GM13976 (cell line): ENCODE measurements at regions of chr5 and their contacts with region 1.

Region 1: DNA sequence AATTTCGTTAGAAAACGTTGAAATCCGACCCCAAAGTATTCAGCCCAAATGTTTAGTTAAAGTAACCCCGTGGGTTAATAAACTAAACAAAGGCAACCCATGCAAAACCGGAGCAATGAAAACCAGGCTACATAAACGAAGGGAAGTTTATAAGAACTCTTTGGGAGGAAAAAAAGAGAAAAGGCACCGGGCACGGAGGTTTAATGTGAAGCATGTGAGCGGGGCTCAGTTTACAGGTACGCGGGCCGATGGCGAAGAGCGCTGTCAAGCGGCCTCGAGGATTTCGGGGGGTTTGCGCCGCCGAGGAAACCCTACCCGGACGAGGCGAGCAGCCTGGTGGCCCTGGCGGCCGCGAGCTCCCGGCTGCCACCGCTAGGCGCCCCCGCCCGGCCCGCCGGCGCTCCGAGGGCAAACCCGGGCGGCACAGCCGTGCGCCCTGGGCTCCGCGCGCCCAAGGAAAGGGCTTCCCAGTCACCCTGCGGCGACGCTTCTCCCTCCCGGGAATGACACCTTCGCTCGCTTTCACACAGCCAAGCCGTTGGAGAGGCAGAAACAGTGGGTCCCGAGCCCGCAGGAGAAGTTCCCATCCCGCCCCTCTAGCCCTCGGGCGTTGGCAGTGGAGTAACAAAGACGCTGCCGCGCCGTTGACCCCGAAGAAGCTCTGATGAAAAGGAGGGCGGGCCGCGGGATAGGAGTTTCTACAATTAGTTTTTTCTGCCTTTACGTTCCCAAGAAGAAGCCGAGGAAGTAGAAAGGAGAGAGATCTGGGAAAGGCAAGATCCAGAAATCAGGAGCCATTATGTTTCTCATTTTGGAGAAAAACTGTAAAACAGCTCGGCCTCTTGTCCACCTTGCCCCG is 126.0 kb downstream of the TMEM174 start:
- DNase-seq: peak; percentile 30
- CTCF ChIP-seq: no peak

Region 2: DNA sequence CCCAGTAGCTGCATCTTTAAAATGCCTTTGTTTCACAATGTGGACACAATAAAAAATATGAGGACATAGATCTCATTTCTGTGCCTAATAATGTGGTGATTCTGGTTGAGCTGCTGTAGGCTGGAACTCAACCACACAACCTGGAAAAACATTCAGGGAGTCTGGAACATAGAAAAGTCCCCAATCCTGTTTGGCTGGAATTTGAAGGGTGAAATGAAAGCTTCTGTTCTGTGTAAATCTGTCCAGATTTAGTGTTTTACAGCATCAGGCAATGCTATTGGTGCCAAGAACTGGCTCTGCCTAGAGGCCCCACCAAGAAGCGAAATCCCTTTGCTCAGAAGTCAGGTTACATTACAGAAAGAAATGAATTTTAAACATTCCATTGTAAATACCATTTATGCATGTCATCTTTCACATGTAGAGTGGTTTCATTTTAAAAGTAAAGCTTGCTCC is 69.8 kb before region 1 on chr5:
- in situ Hi-C with region 1: loop called (anchors 10 kb)
- DNase-seq: no peak
- CTCF ChIP-seq: no peak

Region 3: DNA sequence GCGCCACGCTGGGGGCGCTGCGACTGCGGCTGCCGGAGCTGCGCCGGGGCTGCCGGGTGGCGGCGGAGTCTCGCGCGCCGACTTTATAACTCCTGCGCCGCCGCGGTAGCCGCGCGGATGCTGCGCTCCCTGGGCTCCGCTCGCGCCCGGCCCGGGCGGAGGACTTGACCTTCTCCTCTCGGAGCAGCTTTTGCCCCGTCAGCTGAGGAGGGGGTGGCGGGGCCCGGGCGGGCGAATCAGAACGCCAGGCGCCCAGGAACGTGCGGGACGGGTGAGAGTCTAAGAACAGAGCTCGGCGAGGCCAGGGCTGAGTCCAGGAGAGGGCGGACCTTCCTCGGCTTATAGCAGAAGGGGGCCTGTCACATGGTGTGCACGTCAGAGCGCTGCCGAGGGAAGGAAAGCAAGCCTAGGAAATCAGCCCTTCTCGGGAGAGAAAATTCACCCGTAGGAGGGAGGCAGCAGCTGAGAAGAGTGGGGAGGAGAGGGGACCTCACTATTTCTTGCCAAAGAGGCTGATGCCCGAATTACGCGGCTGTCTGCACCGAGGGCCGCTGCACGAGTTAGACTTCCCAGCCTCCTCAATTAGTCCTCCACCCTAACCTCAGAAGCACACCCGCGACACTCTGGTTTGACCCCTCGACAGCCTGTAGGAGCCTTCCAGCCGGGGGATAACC is 149.6 kb after region 1 on chr5 and contains the start of gene FOXD1:
- in situ Hi-C with region 1: loop called (anchors 10 kb)
- DNase-seq: peak; percentile 57
- CTCF ChIP-seq: no peak